Naive thymus-derived CD4-positive, alpha-beta T cell (primary cell): ENCODE measurements at regions of chr5 and their contacts with region 1.

Region 1: GRCh38 chr5:54844905-54845566 is 140.4 kb downstream of the ESM1 start:
- DNase-seq: peak in 6 of 9 donors; percentile 38 to 67 (median 60)
- ATAC-seq: peak; percentile 34
- H3K4me3 ChIP-seq: no peak overlapping the region
- H3K4me3 Mint-ChIP-seq: peak overlapping the region in 7 of 10 donors; percentile 2 to 68 (median 52)
- H3K27ac ChIP-seq: no peak overlapping the region
- H3K27ac Mint-ChIP-seq: peak overlapping the region in 6 of 9 donors; percentile 45 to 63 (median 56)
- H3K4me1 ChIP-seq: no peaks in the 10 kb centered on the region
- H3K4me1 Mint-ChIP-seq: peaks cover 0 to 21% (median 5%) of the 10 kb centered on the region in 7 donors
- H3K27me3 ChIP-seq: no peaks in the 10 kb centered on the region
- H3K27me3 Mint-ChIP-seq: peaks cover 8 to 18% (median 12%) of the 10 kb centered on the region in 5 donors

Region 2: GRCh38 chr5:54243473-54244080 is 601.5 kb before region 1 on chr5:
- CTCF ChIA-PET with region 1: interaction called, 5 read pairs
- POLR2A ChIA-PET with region 1: no interaction called
- intact Hi-C with region 1: loop called in 1 of 2 experiments (anchors 1 kb)
- DNase-seq: peak in 6 of 9 donors; percentile 10 to 45 (median 36)
- ATAC-seq: peak; percentile 54
- H3K4me3 ChIP-seq: no peak overlapping the region
- H3K4me3 Mint-ChIP-seq: no peak overlapping the region
- H3K27ac ChIP-seq: no peak overlapping the region
- H3K27ac Mint-ChIP-seq: no peak overlapping the region
- H3K4me1 ChIP-seq: no peaks in the 10 kb centered on the region
- H3K4me1 Mint-ChIP-seq: peaks cover 0 to 22% (median 14%) of the 10 kb centered on the region in 7 donors
- H3K27me3 ChIP-seq: no peaks in the 10 kb centered on the region
- H3K27me3 Mint-ChIP-seq: peaks cover 0 to 10% (median 0%) of the 10 kb centered on the region in 5 donors

Region 3: DNA sequence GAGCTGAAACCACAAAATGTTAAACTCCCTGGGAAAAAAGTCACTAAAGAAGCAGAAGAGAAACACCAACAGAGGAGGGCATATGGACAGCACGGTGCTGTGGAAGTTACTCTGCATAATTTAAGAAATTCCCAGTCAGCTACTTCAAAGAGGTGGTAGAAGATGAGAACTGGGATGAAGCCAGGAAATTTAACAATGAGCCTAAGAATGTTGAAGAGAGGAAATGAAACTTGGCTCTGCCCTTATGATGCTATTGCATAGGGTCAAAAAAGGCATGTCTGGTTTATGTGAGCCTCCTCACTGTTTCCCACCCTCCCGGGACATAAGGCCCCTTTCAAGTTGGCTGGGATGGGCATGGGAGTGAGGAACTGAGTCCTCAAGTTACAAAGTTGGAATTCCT is 352.9 kb before region 1 on chr5:
- CTCF ChIA-PET with region 1: interaction called, 5 read pairs
- POLR2A ChIA-PET with region 1: no interaction called
- intact Hi-C with region 1: loop called in 1 of 2 experiments (anchors 1 kb)
- DNase-seq: no peak
- ATAC-seq: no peak
- H3K4me3 ChIP-seq: no peak overlapping the region
- H3K4me3 Mint-ChIP-seq: no peak overlapping the region
- H3K27ac ChIP-seq: no peak overlapping the region
- H3K27ac Mint-ChIP-seq: no peak overlapping the region
- H3K4me1 ChIP-seq: no peaks in the 10 kb centered on the region
- H3K4me1 Mint-ChIP-seq: no peaks in the 10 kb centered on the region
- H3K27me3 ChIP-seq: no peaks in the 10 kb centered on the region
- H3K27me3 Mint-ChIP-seq: peaks cover 0 to 19% (median 4%) of the 10 kb centered on the region in 5 donors

Region 4: DNA sequence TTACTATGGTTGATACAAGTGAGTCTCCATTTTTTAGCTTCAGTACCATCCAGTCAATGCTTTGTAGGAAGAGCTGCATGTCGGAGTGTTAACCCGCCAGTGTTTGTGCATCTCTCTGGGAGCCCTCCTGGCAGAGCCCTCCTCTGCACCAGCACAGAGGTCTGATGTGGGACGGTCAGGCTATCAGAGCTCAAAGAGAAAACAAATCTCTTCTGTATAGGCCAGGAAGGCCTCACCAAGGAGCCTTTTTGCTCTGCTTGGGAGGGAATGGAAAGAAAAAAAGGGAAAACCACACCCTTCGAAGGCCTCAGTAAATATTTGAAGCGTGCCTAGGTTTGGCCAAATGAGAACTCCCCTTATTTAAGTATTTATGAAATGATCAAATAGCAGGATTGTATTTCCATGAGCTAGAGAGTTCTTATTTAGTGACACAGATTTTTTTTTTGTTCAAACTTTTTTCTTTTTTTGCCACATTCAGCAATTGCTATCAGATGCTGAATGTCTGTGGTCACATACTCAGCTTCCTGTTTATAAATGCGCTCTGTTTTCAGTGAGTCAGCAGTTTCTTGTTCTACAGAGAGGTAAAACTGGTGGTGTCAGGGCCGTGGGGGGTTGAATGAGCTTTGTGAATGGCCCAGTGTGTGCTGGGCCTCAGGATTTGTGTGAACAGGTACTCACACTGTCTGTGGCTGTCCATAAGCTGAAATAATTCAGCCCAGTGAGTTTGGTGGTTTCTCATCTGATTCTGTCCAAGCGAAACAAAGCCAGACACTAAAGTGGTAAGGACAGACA is 100.8 kb before region 1 on chr5:
- CTCF ChIA-PET with region 1: interaction called, 11 read pairs
- POLR2A ChIA-PET with region 1: interaction called, 3 read pairs
- intact Hi-C with region 1: no loop called
- DNase-seq: peak in 8 of 9 donors; percentile 38 to 71 (median 52)
- ATAC-seq: peak; percentile 90
- H3K4me3 ChIP-seq: peak overlapping the region; percentile 9
- H3K4me3 Mint-ChIP-seq: peak overlapping the region in 9 of 10 donors; percentile 3 to 77 (median 35)
- H3K27ac ChIP-seq: no peak overlapping the region
- H3K27ac Mint-ChIP-seq: peak overlapping the region in 8 of 9 donors; percentile 25 to 82 (median 36)
- H3K4me1 ChIP-seq: peaks cover 11 to 35% of the 10 kb centered on the region in 2 donors
- H3K4me1 Mint-ChIP-seq: peaks cover 16 to 57% (median 20%) of the 10 kb centered on the region in 7 donors
- H3K27me3 ChIP-seq: no peaks in the 10 kb centered on the region
- H3K27me3 Mint-ChIP-seq: peaks cover 0 to 6% (median 4%) of the 10 kb centered on the region in 5 donors

Region 5: DNA sequence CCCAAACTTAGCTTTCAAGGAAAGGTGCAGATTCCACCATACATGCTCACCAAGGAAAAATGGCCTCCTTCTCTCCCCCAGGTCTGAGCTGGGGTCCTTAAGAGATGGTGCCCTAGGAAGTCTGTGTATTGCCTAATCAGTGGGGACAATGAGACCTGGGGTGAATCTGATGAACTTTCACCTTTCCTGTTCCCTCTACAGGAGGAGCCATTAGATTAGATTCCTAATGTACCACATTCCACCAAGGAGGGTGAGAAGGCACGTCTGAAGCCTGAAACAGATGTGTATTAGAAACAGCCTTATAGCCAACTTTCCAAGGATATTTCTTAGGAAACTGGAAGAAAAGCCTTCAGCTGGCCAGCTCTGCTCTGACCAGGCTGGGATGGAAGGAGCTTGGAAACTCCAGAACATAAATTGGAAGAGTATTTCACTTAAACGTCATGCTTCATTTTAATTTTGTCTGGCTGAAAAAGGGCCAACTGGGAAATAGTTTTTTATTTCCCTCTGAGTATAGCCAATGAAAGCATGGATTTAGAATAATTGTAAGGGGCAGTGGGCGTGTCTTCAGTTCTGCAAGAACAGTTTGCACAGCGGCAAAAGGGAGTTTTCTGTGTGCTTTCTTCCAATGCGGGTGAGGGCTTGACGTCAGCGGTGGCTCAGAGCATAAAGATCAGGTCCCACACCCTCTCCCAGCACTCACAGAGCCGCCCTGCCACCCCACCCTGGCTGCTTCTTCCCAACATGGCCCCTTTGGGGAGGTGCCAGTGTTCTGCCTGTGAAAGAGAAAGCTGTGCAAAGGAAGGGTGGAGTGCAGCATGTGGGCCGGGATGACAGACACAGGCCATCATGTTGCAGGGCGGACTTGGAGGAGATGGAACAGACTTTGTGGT is 70.5 kb before region 1 on chr5:
- CTCF ChIA-PET with region 1: no interaction called
- POLR2A ChIA-PET with region 1: no interaction called
- intact Hi-C with region 1: no loop called
- DNase-seq: no peak
- ATAC-seq: peak; percentile 71
- H3K4me3 ChIP-seq: no peak overlapping the region
- H3K4me3 Mint-ChIP-seq: no peak overlapping the region
- H3K27ac ChIP-seq: no peak overlapping the region
- H3K27ac Mint-ChIP-seq: no peak overlapping the region
- H3K4me1 ChIP-seq: no peaks in the 10 kb centered on the region
- H3K4me1 Mint-ChIP-seq: peaks cover 0 to 9% (median 0%) of the 10 kb centered on the region in 7 donors
- H3K27me3 ChIP-seq: no peaks in the 10 kb centered on the region
- H3K27me3 Mint-ChIP-seq: peaks cover 0 to 61% (median 16%) of the 10 kb centered on the region in 5 donors

Region 6: GRCh38 chr5:55159763-55160492 is 314.9 kb after region 1 on chr5 and contains the start of gene GPX8:
- CTCF ChIA-PET with region 1: no interaction called
- POLR2A ChIA-PET with region 1: no interaction called
- intact Hi-C with region 1: loop called in 1 of 2 experiments (anchors 2 kb)
- DNase-seq: peak in 7 of 9 donors; percentile 27 to 65 (median 54)
- ATAC-seq: peak; percentile 75
- H3K4me3 ChIP-seq: no peak within 1 kb of the TSS
- H3K4me3 Mint-ChIP-seq: no peak within 1 kb of the TSS
- H3K27ac ChIP-seq: no peak within 1 kb of the TSS
- H3K27ac Mint-ChIP-seq: no peak within 1 kb of the TSS
- H3K4me1 ChIP-seq: no peaks in the 10 kb centered on the region
- H3K4me1 Mint-ChIP-seq: peaks cover 0 to 9% (median 0%) of the 10 kb centered on the region in 7 donors
- H3K27me3 ChIP-seq: no peaks in the 10 kb centered on the region
- H3K27me3 Mint-ChIP-seq: peaks cover 6 to 75% (median 29%) of the 10 kb centered on the region in 5 donors
- total RNA-seq, gene GPX8: not detected